ENCODE measurements at regions of chr3 and their contacts with region 1.

Region 1: GRCh38 chr3:48697952-48698351 is 12.2 kb upstream of the NCKIPSD start:
- DNase-seq: no peak
- ATAC-seq: no peak
- H3K4me3 Mint-ChIP-seq: no peak overlapping the region
- H3K27ac Mint-ChIP-seq: no peak overlapping the region
- H3K4me1 Mint-ChIP-seq: peaks cover 4% of the 10 kb centered on the region
- H3K27me3 Mint-ChIP-seq: no peaks in the 10 kb centered on the region

Region 2: GRCh38 chr3:48456456-48456855 is 241.5 kb before region 1 on chr3:
- CTCF ChIA-PET with region 1: no interaction called
- POLR2A ChIA-PET with region 1: no interaction called
- DNase-seq: no peak
- ATAC-seq: no peak
- H3K4me3 Mint-ChIP-seq: no peak overlapping the region
- H3K27ac Mint-ChIP-seq: no peak overlapping the region
- H3K4me1 Mint-ChIP-seq: peaks cover 17% of the 10 kb centered on the region
- H3K27me3 Mint-ChIP-seq: no peaks in the 10 kb centered on the region

Region 3: DNA sequence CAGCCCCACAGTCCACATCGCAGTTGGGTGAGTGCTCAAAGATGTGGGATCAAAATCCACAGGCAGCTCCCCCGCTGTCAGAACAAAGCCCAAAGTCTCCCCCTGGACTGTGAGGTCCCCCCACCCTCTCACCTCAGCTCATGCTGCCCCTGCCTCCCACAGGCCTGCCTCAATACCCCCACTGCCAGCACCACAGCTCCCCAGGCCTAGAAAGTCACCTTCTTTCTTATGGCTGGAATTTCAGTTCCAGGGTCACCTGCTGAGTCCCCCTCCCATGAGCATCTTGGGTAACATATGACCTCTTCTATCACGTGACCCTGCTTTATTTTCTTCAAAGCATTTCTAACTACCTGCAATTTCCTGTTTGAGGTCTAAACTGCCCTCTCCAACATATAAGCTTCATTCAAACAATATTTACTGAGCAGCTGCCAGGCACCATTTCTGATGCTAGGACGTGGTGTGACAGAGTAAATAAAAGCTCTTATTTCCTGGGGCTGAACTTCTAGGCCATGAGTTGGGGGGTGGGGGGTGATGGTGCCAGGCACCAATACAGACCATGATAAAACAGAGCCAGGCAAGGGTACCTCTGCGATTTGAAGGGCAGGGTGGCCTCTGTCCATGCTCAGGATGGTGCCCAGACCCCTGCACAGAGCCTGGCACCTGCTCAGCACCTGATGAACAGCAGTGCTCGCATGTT is 74.0 kb before region 1 on chr3:
- CTCF ChIA-PET with region 1: no interaction called
- POLR2A ChIA-PET with region 1: no interaction called
- DNase-seq: no peak
- ATAC-seq: no peak
- H3K4me3 Mint-ChIP-seq: no peak overlapping the region
- H3K27ac Mint-ChIP-seq: peak overlapping the region; percentile 47
- H3K4me1 Mint-ChIP-seq: peaks cover 13% of the 10 kb centered on the region
- H3K27me3 Mint-ChIP-seq: no peaks in the 10 kb centered on the region

Region 4: DNA sequence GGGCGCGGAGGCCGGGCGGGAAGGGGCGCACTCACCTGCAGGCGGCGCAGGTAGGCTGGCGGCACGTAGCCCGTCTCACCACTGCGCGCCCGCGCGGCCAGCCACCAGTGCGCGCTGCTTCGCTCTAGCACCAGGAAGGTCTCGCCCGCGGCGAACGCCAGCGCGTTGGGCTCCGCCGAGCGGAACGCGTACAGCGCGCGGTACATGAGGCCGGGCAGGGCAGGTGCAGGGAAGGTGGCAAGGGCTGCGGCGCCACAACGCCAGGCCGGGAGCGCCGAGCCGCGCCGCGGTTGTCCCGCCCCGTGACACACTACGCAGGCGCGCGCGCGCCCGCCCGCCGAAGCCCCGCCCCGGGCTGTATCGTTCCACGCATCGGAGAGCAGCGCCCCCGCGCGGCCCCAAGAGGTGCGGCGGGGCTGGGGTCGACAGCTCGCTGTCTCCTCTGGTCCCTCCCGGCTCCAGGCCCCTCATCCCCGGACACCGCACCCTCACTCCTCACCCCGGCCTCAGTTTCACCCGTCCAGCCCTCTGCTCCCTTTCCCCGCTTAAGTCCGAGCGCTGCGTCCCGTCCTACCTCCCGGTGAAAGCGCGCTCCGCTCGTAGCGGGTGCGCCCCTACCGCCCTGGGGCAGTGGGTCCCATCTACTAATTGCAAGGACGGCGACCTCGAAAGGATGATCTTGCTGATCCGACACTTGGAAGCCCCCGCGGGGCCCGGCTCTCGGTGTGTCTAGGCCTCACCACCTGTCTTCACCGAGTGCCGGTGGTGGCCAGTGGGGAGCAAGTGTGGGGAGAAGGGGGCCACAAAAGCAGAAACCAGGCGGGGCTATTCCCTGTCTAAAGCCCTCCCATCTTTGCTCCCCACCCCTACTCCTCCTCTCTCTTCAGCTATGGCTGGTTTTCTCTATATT is 12.1 kb before region 1 on chr3 and contains the start of gene NCKIPSD:
- CTCF ChIA-PET with region 1: interaction called, 11 read pairs
- POLR2A ChIA-PET with region 1: no interaction called
- DNase-seq: peak; percentile 92
- ATAC-seq: peak; percentile 88
- H3K4me3 Mint-ChIP-seq: peak within 1 kb of the TSS; percentile 83
- H3K27ac Mint-ChIP-seq: peak within 1 kb of the TSS; percentile 88
- H3K4me1 Mint-ChIP-seq: peaks cover 34% of the 10 kb centered on the region
- H3K27me3 Mint-ChIP-seq: no peaks in the 10 kb centered on the region
- total RNA-seq, gene NCKIPSD: 56.5 to 57.1 TPM

Region 5: DNA sequence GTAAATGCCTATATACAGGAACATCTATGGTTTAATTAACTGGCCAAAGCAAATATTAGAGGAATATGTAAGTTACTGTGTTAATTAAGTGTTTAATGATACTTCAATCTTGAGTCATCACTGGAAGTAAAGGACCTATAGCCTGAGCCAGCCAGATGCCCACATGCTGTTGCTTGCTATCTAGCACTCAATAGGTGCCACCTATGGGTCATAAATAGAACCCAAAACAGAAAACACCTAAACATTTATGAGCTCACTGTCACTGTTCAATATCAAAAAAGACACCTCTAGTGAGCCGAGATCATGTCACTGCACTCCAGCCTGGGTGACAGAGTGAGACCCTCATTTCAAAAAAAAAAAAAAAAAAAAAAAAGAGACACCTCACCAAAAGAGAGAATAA is 67.4 kb after region 1 on chr3:
- CTCF ChIA-PET with region 1: no interaction called
- POLR2A ChIA-PET with region 1: no interaction called
- DNase-seq: no peak
- ATAC-seq: no peak
- H3K4me3 Mint-ChIP-seq: no peak overlapping the region
- H3K27ac Mint-ChIP-seq: no peak overlapping the region
- H3K4me1 Mint-ChIP-seq: no peaks in the 10 kb centered on the region
- H3K27me3 Mint-ChIP-seq: no peaks in the 10 kb centered on the region

Measured in activated CD8-positive, alpha-beta T cell treated with anti-CD3 and anti-CD28 coated beads, Interleukin-2, amount 10 ng/mL, durations not matched to agents 7 days and 5 days (primary cell).